ENCODE measurements at regions of chr2 and their contacts with region 1.

Region 1: GRCh38 chr2:186641807-186642321 is 52.0 kb upstream of the FAM171B start:
- H3K4me3 Mint-ChIP-seq: no peak overlapping the region
- H3K27ac Mint-ChIP-seq: no peak overlapping the region
- H3K4me1 Mint-ChIP-seq: peaks cover 35% of the 10 kb centered on the region
- H3K27me3 Mint-ChIP-seq: no peaks in the 10 kb centered on the region

Region 2: GRCh38 chr2:186503848-186504606 is 137.8 kb before region 1 on chr2:
- intact Hi-C with region 1: loop called (anchors 1 kb)
- H3K4me3 Mint-ChIP-seq: no peak overlapping the region
- H3K27ac Mint-ChIP-seq: peak overlapping the region; percentile 26
- H3K4me1 Mint-ChIP-seq: peaks cover 7% of the 10 kb centered on the region
- H3K27me3 Mint-ChIP-seq: no peaks in the 10 kb centered on the region

Region 3: GRCh38 chr2:186734957-186735734 is 93.3 kb after region 1 on chr2:
- intact Hi-C with region 1: no loop called
- H3K4me3 Mint-ChIP-seq: no peak overlapping the region
- H3K27ac Mint-ChIP-seq: no peak overlapping the region
- H3K4me1 Mint-ChIP-seq: no peaks in the 10 kb centered on the region
- H3K27me3 Mint-ChIP-seq: no peaks in the 10 kb centered on the region